ENCODE measurements at regions of chr7 and their contacts with region 1.

Region 1: GRCh38 chr7:33109005-33109757 is at the start of gene RP9:
- DNase-seq: no peak
- H3K4me3 ChIP-seq: peak within 1 kb of the TSS; percentile 97 to 99 (median 98)
- H3K27ac ChIP-seq: peak within 1 kb of the TSS; percentile 80 to 89 (median 85)
- H3K4me1 ChIP-seq: peaks cover 36 to 44% (median 42%) of the 10 kb centered on the region in 4 donors
- H3K27me3 ChIP-seq: no peaks in the 10 kb centered on the region
- CTCF ChIP-seq: peak; percentile 63 to 75 (median 67)
- EP300 ChIP-seq: no peak
- POLR2A ChIP-seq: no peak
- total RNA-seq, gene RP9: 7.6 to 11.5 (median 10.1) TPM

Region 2: GRCh38 chr7:32803406-32804141 is 305.6 kb before region 1 on chr7:
- intact Hi-C with region 1: loop called (anchors 10 kb)
- DNase-seq: no peak
- H3K4me3 ChIP-seq: no peak overlapping the region
- H3K27ac ChIP-seq: no peak overlapping the region
- H3K4me1 ChIP-seq: peaks cover 0 to 5% (median 2%) of the 10 kb centered on the region in 4 donors
- H3K27me3 ChIP-seq: no peaks in the 10 kb centered on the region
- CTCF ChIP-seq: no peak
- EP300 ChIP-seq: no peak
- POLR2A ChIP-seq: no peak

Region 3: DNA sequence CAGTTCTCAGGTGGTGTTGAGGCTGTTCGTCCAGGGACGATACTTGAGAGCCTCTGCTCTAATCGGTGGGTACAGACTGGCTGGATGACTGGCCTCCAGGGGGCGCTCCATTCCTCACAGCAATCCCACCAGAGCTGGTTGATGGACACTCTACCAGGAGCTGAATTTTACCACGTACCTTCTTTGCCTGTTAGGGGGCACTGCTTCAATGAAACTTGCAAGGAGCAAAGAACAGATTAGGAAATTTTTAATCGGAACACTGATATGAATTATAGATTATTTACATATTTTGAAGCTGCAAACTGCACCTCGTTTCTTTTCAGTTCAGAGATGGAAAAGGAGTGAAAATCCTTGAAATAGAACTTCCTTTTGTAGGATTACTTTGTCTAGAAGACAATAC is 262.5 kb before region 1 on chr7:
- intact Hi-C with region 1: loop called (anchors 5 kb)
- DNase-seq: peak; percentile 96
- H3K4me3 ChIP-seq: peak overlapping the region in 1 of 4 donors; percentile 7
- H3K27ac ChIP-seq: no peak overlapping the region
- H3K4me1 ChIP-seq: peaks cover 4 to 9% (median 7%) of the 10 kb centered on the region in 4 donors
- H3K27me3 ChIP-seq: no peaks in the 10 kb centered on the region
- CTCF ChIP-seq: peak; percentile 89 to 93 (median 92)
- EP300 ChIP-seq: no peak
- POLR2A ChIP-seq: no peak

Region 4: GRCh38 chr7:33009734-33010133 is 99.4 kb before region 1 on chr7:
- intact Hi-C with region 1: no loop called
- DNase-seq: no peak
- H3K4me3 ChIP-seq: no peak overlapping the region
- H3K27ac ChIP-seq: no peak overlapping the region
- H3K4me1 ChIP-seq: no peaks in the 10 kb centered on the region
- H3K27me3 ChIP-seq: no peaks in the 10 kb centered on the region
- CTCF ChIP-seq: no peak
- EP300 ChIP-seq: no peak
- POLR2A ChIP-seq: no peak

Region 5: DNA sequence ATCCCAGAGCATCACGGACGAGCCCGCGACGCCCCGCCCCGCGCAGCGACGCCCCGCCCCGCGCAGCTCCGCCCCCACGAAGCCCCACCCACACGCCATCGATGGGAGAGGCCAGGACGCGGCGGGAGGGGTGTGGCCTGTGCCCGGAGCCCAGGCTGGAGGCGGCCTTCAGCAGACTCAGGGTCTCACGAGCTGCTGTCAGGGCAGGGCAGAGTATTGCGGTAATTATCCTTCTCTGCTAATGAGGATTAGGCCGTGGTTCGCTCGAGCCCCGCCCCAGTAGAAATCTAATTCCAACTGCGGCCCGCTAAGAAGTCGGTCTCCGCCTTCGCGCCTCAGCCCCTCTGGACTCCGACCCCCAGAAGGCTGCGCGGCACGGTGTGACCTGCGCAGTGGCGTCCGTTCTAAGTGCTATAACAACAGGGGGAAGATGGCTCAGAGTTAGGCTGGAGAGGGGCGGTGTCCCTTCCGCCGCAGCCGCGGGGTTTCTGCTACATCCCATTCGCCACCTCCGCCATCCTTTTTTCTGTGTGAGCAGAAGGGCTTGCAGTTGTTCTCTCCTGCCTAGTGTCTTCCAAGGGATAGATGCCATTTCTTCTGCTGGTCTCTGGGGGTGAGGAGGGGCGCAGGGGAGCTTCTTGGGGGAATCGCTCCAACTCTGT is 46.3 kb before region 1 on chr7:
- intact Hi-C with region 1: loop called (anchors 2 kb)
- DNase-seq: peak; percentile 98
- H3K4me3 ChIP-seq: peak overlapping the region; percentile 82 to 94 (median 84)
- H3K27ac ChIP-seq: peak overlapping the region; percentile 92 to 94 (median 93)
- H3K4me1 ChIP-seq: peaks cover 26 to 43% (median 32%) of the 10 kb centered on the region in 4 donors
- H3K27me3 ChIP-seq: no peaks in the 10 kb centered on the region
- CTCF ChIP-seq: peak in 1 of 3 experiments; percentile 5
- EP300 ChIP-seq: no peak
- POLR2A ChIP-seq: no peak

Region 6: DNA sequence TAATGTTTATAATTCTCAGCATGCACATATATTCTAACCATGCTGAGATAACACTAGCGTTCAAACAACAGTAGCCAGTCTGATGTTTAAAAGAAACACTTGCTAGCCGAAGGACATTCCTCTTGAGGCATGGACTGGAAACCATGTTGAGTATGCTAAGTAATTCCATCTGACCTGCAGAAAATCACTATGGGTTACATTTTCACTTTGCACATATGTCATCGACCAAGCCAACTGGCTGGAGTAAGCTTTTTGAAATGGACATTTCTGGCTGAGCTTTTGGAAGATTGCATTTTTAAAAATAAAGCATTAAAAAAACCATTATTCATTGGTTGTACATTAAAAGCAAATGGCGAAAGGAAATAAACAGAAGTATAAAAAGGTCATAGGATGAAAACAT is 108.4 kb after region 1 on chr7:
- intact Hi-C with region 1: no loop called
- DNase-seq: no peak
- H3K4me3 ChIP-seq: no peak overlapping the region
- H3K27ac ChIP-seq: no peak overlapping the region
- H3K4me1 ChIP-seq: peaks cover 0 to 21% (median 10%) of the 10 kb centered on the region in 4 donors
- H3K27me3 ChIP-seq: no peaks in the 10 kb centered on the region
- CTCF ChIP-seq: no peak
- EP300 ChIP-seq: no peak
- POLR2A ChIP-seq: no peak

Measured in esophagus muscularis mucosa (tissue), 4 donors.